HepG2 (cell line): ENCODE measurements at regions of chr5 and their contacts with region 1.

Region 1: DNA sequence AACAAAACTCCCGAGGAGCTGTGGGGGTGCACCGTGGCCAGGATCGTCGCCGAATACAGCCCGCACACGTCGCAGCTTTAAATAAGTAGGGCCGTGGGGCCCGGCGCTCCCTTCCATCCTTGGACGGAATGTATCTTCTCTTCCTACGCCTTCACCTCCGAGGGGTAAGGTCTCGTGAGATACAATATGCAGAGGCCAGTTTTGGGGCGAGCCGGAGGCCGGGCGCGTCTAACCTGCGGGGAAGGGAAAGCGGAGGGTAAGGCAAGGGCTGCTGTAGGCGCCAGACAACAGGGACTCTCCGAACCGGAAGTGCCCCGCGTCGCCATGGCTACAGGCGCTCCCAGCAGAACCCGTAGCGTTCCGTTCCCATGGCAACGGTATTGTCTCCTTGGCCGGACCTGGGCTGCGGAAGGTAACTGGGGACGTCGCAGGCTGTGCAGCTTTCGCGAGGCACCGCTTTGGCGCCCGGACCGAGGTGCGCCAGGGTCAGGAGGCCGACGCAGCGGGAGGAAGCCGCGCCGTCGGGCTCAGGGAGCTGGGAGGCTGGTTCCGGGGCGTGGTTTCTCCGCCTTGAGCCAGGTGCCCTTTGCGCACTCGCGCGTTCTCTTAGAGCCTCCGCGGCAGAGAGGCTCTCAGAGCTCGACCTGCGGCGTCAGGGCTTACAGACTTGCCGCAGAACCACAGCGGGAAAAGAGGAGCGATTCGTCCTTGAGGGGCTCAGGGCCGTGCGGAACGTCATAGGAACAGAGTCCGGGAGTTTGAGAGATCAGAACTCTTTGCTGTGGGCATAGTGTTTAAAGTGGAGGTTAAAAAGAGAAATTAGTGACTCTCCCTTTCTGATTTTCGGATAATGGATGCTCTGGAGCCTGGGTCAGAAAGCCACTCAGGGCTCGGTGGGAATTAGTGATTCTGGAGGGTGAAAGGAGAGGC is at the start of gene TTC23L:
- DNase-seq: peak; percentile 96
- ATAC-seq: peak; percentile 97
- H3K4me3 ChIP-seq: peak within 1 kb of the TSS; percentile 67 to 76 (median 74)
- H3K27ac ChIP-seq: peak within 1 kb of the TSS; percentile 84
- H3K4me1 ChIP-seq: peaks cover 23% of the 10 kb centered on the region
- H3K27me3 ChIP-seq: no peaks in the 10 kb centered on the region
- CTCF ChIP-seq: peak; percentile 41
- EP300 ChIP-seq: peak; percentile 42 to 48; a peak in 3 of 4 replicates
- POLR2A ChIP-seq: peak; percentile 94 to 96
- RAD21 ChIP-seq: peak; percentile 66; the same call in 1 of the 2 replicates
- total RNA-seq, gene TTC23L: 1.1 and 1.4 TPM in 2 replicates

Region 2: GRCh38 chr5:34756781-34757624 is 82.0 kb before region 1 on chr5:
- CTCF ChIA-PET with region 1: no interaction called
- POLR2A ChIA-PET with region 1: interaction called, 4 read pairs
- in situ Hi-C with region 1: no loop called
- intact Hi-C with region 1: loop called (anchors 10 kb)
- DNase-seq: peak; percentile 83
- ATAC-seq: peak; percentile 97
- H3K4me3 ChIP-seq: peak overlapping the region; percentile 33 to 46 (median 44); a peak in 5 of 6 replicates
- H3K27ac ChIP-seq: peak overlapping the region; percentile 78
- H3K4me1 ChIP-seq: peaks cover 48% of the 10 kb centered on the region
- H3K27me3 ChIP-seq: no peaks in the 10 kb centered on the region
- CTCF ChIP-seq: no peak
- EP300 ChIP-seq: peak in 1 of 2 experiments; percentile 62; a peak in 2 of 4 replicates
- POLR2A ChIP-seq: no peak
- RAD21 ChIP-seq: no peak